H1 (cell line): ENCODE measurements at regions of chr7 and their contacts with region 1.

Region 1: GRCh38 chr7:128135515-128136214 is 104.4 kb upstream of the LRRC4 start:
- DNase-seq: peak in 1 of 2 experiments; percentile 85
- H3K4me3 ChIP-seq: peak overlapping the region; percentile 48 to 82 (median 58)
- H3K27ac ChIP-seq: no peak overlapping the region
- H3K4me1 ChIP-seq: peaks cover 0 to 4% (median 2%) of the 10 kb centered on the region in 4 experiments; a peak in 2 of 7 replicates
- H3K27me3 ChIP-seq: peaks cover 10 to 38% (median 29%) of the 10 kb centered on the region in 4 experiments
- CTCF ChIP-seq: peak; percentile 79 to 84 (median 83)
- EP300 ChIP-seq: peak in 1 of 2 experiments; percentile 94; a peak in 2 of 3 replicates
- POLR2A ChIP-seq: no peak
- RAD21 ChIP-seq: peak; percentile 41 to 80; a peak in 3 of 4 replicates

Region 2: DNA sequence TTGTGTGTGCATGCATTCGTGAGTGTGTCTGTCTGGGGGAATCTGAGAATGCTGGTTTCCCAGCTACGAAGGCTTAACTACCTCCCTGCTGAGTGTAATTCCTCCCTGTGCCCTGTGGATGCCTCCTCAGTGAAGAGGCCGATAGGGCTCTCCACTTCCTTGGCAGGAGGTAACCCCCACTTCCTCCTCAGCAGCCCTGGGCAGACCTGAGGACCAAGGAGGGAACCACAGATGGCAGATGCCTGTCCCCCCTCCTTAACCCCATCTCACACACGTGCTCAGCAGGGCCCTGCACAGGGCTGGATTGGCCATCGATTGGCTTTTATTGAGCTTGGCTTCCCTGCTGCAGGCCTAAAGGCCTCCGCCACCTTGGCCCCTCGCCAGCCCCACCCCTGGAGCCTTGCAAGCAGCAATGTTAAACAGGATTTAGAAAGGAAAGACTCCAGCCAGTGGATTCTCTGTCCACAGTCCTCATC is 58.8 kb before region 1 on chr7:
- CTCF ChIA-PET with region 1: interaction called, 12 read pairs
- POLR2A ChIA-PET with region 1: no interaction called
- DNase-seq: no peak
- H3K4me3 ChIP-seq: no peak overlapping the region
- H3K27ac ChIP-seq: no peak overlapping the region
- H3K4me1 ChIP-seq: peaks cover 0 to 8% (median 0%) of the 10 kb centered on the region in 4 experiments; a peak in 3 of 7 replicates
- H3K27me3 ChIP-seq: no peaks in the 10 kb centered on the region
- CTCF ChIP-seq: no peak
- EP300 ChIP-seq: no peak
- POLR2A ChIP-seq: no peak
- RAD21 ChIP-seq: no peak

Region 3: GRCh38 chr7:128115391-128116332 is 20.0 kb before region 1 on chr7:
- CTCF ChIA-PET with region 1: interaction called, 16 read pairs
- POLR2A ChIA-PET with region 1: no interaction called
- DNase-seq: peak in 1 of 2 experiments; percentile 40
- H3K4me3 ChIP-seq: no peak overlapping the region
- H3K27ac ChIP-seq: no peak overlapping the region
- H3K4me1 ChIP-seq: peaks cover 0 to 9% (median 4%) of the 10 kb centered on the region in 4 experiments; a peak in 4 of 7 replicates
- H3K27me3 ChIP-seq: peaks cover 2 to 14% (median 6%) of the 10 kb centered on the region in 4 experiments; a peak in 4 of 7 replicates
- CTCF ChIP-seq: no peak
- EP300 ChIP-seq: peak in 1 of 2 experiments; percentile 26; a peak in 1 of 3 replicates
- POLR2A ChIP-seq: no peak
- RAD21 ChIP-seq: no peak

Region 4: DNA sequence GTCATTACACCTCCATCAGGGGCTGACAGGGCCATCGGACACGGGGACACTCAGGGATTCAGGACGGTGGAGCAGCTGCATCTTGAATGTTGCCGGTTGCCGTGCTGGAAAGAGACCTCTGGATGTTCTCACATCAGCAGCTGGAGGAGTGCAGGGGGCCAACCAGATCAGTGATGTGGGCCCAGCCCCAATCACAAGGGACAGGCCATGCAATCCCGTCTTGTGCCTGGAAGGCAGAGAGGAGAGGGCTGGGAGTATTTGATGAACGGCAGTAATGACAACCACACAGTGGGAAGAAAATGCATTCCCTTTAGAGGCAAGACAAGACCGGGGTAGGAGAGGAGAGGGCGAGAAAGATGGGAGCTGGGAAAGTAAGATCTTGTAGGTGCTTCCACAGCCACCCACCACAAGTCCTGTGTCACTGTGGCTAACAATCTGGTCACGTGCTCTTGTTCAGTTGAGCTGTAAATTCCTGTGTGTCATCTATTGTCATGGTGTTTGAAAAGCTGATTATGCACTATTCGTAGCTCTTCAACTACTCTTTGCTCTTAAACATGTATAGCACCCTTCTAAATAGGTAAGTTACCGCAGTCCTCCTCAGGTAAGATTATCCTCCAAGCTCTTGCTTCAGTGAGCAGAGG is 19.6 kb after region 1 on chr7:
- CTCF ChIA-PET with region 1: interaction called, 37 read pairs
- POLR2A ChIA-PET with region 1: no interaction called
- DNase-seq: no peak
- H3K4me3 ChIP-seq: no peak overlapping the region
- H3K27ac ChIP-seq: no peak overlapping the region
- H3K4me1 ChIP-seq: peaks cover 8 to 11% (median 9%) of the 10 kb centered on the region in 4 experiments
- H3K27me3 ChIP-seq: peaks cover 0 to 2% (median 0%) of the 10 kb centered on the region in 4 experiments; a peak in 3 of 7 replicates
- CTCF ChIP-seq: no peak
- EP300 ChIP-seq: no peak
- POLR2A ChIP-seq: no peak
- RAD21 ChIP-seq: no peak

Region 5: GRCh38 chr7:128167042-128167691 is 31.5 kb after region 1 on chr7:
- CTCF ChIA-PET with region 1: interaction called, 49 read pairs
- POLR2A ChIA-PET with region 1: interaction called, 5 read pairs
- DNase-seq: no peak
- H3K4me3 ChIP-seq: peak overlapping the region; percentile 31 to 87 (median 70)
- H3K27ac ChIP-seq: no peak overlapping the region
- H3K4me1 ChIP-seq: peaks cover 6 to 31% (median 20%) of the 10 kb centered on the region in 4 experiments
- H3K27me3 ChIP-seq: peaks cover 37 to 83% (median 67%) of the 10 kb centered on the region in 4 experiments
- CTCF ChIP-seq: no peak
- EP300 ChIP-seq: no peak
- POLR2A ChIP-seq: no peak
- RAD21 ChIP-seq: no peak

Region 6: DNA sequence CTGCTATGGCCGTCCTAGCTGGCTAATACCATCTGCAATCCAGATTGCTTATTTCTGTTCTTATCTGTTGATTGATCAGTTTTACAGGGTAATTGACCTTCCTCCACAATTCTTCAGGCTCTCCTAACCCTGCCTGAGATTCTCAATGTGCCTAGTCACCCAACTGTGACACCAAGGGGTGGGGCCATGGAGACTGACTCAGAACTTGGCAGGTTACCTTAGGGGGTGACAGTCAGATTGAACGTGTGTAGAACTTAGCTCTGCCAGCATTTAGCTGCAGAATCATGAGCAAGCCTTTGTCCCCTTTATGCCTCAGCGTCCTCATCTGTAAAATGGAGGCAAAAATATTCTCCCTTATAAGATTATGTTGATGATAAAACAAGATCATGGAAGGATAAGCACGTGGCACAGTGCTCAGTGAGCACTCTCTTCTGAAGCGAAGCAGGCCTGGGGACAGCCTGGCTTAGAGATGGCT is 86.3 kb after region 1 on chr7:
- CTCF ChIA-PET with region 1: interaction called, 12 read pairs
- POLR2A ChIA-PET with region 1: no interaction called
- DNase-seq: no peak
- H3K4me3 ChIP-seq: no peak overlapping the region
- H3K27ac ChIP-seq: no peak overlapping the region
- H3K4me1 ChIP-seq: no peaks in the 10 kb centered on the region
- H3K27me3 ChIP-seq: no peaks in the 10 kb centered on the region; a peak in 1 of 7 replicates
- CTCF ChIP-seq: no peak
- EP300 ChIP-seq: no peak
- POLR2A ChIP-seq: no peak
- RAD21 ChIP-seq: no peak